ENCODE measurements at regions of chr6 and their contacts with region 1.

Region 1: GRCh38 chr6:169789982-169790927 is 38.8 kb downstream of the ERMARD start:
- DNase-seq: peak; percentile 60 to 73 (median 69)
- H3K4me3 ChIP-seq: peak overlapping the region; percentile 71 to 82
- H3K4me3 Mint-ChIP-seq: peak overlapping the region; percentile 88 to 93 (median 90)
- H3K27ac ChIP-seq: peak overlapping the region; percentile 4
- H3K27ac Mint-ChIP-seq: peak overlapping the region in 5 of 7 donors; percentile 53 to 88 (median 81)
- H3K4me1 ChIP-seq: peaks cover 16% of the 10 kb centered on the region
- H3K4me1 Mint-ChIP-seq: peaks cover 6 to 24% (median 13%) of the 10 kb centered on the region in 4 donors
- H3K27me3 ChIP-seq: no peaks in the 10 kb centered on the region
- H3K27me3 Mint-ChIP-seq: peaks cover 0 to 3% of the 10 kb centered on the region in 2 donors

Region 2: DNA sequence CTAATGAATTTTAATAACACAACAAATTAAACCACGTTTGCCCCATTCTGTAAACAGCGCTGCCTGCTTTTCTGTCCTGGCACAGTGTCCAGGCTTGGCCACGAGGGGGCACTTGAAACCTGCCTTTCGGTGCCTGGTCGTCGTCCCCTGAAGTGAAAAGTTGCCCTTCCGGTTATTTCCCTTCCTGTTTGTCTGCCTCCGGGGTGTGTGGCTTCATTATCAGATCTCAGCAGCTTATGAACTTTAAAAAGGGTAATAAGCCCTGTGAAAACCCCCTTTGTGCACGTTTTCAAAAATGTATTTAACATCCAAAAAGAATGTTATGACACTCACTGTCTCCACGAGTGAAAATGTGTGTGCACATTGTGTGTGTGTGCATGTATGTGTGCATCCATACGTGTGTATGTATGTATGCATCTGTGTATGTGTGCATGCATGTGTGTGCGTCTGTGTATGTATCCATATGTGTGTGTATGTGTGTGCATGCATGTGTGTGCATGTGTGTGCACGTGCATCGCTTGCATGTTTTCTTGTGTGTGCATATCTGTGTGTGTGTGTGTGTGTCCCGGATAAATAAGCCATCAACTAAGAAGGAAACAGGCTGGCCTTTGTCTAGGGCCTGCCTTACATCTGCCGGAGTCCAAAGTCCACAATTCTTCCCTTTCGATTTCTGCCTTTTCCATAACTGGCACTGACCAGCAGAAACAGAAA is 895.0 kb before region 1 on chr6:
- CTCF ChIA-PET with region 1: interaction called, 4 read pairs
- POLR2A ChIA-PET with region 1: no interaction called
- intact Hi-C with region 1: loop called (anchors 5 kb)
- DNase-seq: peak; percentile 71 to 78 (median 74)
- H3K4me3 ChIP-seq: no peak overlapping the region
- H3K4me3 Mint-ChIP-seq: peak overlapping the region; percentile 40 to 87 (median 60)
- H3K27ac ChIP-seq: no peak overlapping the region
- H3K27ac Mint-ChIP-seq: peak overlapping the region in 5 of 7 donors; percentile 8 to 77 (median 53)
- H3K4me1 ChIP-seq: peaks cover 8% of the 10 kb centered on the region
- H3K4me1 Mint-ChIP-seq: peaks cover 9 to 28% (median 11%) of the 10 kb centered on the region in 4 donors
- H3K27me3 ChIP-seq: no peaks in the 10 kb centered on the region
- H3K27me3 Mint-ChIP-seq: peaks cover 3% of the 10 kb centered on the region in 2 donors

Region 3: DNA sequence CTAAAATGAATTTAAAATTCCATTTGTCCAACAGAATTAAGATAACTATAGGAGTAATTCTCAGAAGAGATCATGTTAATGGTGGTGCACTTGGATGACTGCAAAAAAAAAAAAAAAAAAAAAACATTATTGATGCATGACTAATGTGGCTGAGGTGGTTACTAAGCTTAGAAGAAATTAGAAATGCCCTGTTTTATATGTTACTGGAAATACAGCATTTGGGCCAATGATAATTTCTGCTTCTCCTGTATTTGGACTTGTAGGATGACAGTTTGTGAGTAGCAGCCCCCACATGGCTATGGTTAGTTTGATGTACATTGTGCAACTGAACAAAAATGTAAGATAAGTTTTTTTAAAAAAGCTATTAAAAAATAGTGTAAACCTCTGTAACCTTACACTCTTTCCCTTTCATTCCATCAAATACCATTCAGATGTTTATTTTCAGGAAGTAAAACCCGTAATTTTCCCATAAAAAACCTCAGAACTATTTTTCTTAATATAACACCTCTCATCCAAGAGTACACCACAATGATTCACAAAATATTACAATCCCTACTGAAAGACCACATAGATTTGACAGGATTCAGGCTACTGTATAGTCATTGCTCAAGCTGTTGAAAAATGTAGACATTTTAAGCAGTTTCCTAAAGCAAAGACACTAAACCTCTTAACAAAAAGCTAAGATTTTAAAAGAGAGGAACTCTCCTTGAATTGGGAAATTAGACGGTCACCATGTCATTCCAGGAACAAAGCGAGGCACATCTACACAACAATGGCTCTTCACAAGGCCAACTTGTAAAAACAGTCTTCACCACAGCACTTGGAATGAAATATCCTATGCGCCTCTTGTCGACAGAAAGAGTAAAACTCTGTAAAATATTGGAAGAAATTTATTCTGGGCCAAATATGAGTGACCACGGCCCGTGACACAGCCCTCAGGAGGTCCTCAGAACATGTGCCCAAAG is 171.4 kb before region 1 on chr6:
- CTCF ChIA-PET with region 1: no interaction called
- POLR2A ChIA-PET with region 1: no interaction called
- intact Hi-C with region 1: no loop called
- DNase-seq: no peak
- H3K4me3 ChIP-seq: no peak overlapping the region
- H3K4me3 Mint-ChIP-seq: no peak overlapping the region
- H3K27ac ChIP-seq: no peak overlapping the region
- H3K27ac Mint-ChIP-seq: no peak overlapping the region
- H3K4me1 ChIP-seq: no peaks in the 10 kb centered on the region
- H3K4me1 Mint-ChIP-seq: no peaks in the 10 kb centered on the region
- H3K27me3 ChIP-seq: no peaks in the 10 kb centered on the region
- H3K27me3 Mint-ChIP-seq: no peaks in the 10 kb centered on the region

Region 4: DNA sequence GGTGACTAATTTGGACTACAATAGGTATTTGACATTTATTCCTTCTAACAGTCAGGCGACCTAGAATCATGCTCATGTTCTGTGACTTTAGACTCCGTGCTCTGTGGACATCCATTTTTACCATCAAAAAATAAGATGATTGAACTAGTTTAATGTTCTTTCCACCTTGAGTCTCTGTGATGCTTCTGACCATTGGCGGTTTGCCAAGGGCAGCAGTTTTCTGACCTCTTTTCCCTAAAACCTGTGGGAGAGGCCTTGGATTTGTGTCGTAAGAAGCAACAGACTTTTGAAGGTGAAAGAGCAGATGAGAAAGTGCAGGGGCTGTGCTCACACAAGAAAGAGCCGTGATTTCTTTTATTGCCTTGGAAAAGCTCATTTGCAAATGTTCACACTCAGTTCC is 21.4 kb before region 1 on chr6:
- CTCF ChIA-PET with region 1: interaction called, 16 read pairs
- POLR2A ChIA-PET with region 1: no interaction called
- intact Hi-C with region 1: no loop called
- DNase-seq: no peak
- H3K4me3 ChIP-seq: no peak overlapping the region
- H3K4me3 Mint-ChIP-seq: no peak overlapping the region
- H3K27ac ChIP-seq: no peak overlapping the region
- H3K27ac Mint-ChIP-seq: no peak overlapping the region
- H3K4me1 ChIP-seq: no peaks in the 10 kb centered on the region
- H3K4me1 Mint-ChIP-seq: peaks cover 0 to 7% (median 0%) of the 10 kb centered on the region in 4 donors
- H3K27me3 ChIP-seq: no peaks in the 10 kb centered on the region
- H3K27me3 Mint-ChIP-seq: no peaks in the 10 kb centered on the region

Region 5: DNA sequence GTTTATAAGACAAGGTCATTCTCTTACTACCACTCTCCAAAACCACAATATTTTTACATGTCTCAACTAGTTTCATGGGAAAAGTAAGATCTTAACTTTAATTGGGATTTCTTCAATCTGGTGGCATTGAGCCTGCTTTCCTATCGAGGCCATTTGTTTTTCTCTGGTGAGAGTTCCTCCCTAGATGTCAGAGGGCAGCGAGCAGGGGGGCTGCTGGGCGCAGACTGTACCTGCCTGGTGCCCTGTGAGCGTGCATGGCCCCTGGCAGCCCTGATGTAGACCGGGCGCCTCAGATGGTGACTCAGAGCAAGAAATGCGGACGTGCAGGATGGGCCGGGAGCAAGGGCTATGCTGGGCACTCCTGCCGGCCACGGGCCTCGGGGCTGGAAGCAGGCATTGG is 11.6 kb before region 1 on chr6:
- CTCF ChIA-PET with region 1: interaction called, 16 read pairs
- POLR2A ChIA-PET with region 1: no interaction called
- intact Hi-C with region 1: no loop called
- DNase-seq: no peak
- H3K4me3 ChIP-seq: no peak overlapping the region
- H3K4me3 Mint-ChIP-seq: no peak overlapping the region
- H3K27ac ChIP-seq: no peak overlapping the region
- H3K27ac Mint-ChIP-seq: peak overlapping the region in 1 of 7 donors; percentile 60
- H3K4me1 ChIP-seq: no peaks in the 10 kb centered on the region
- H3K4me1 Mint-ChIP-seq: no peaks in the 10 kb centered on the region
- H3K27me3 ChIP-seq: no peaks in the 10 kb centered on the region
- H3K27me3 Mint-ChIP-seq: no peaks in the 10 kb centered on the region

Region 6: DNA sequence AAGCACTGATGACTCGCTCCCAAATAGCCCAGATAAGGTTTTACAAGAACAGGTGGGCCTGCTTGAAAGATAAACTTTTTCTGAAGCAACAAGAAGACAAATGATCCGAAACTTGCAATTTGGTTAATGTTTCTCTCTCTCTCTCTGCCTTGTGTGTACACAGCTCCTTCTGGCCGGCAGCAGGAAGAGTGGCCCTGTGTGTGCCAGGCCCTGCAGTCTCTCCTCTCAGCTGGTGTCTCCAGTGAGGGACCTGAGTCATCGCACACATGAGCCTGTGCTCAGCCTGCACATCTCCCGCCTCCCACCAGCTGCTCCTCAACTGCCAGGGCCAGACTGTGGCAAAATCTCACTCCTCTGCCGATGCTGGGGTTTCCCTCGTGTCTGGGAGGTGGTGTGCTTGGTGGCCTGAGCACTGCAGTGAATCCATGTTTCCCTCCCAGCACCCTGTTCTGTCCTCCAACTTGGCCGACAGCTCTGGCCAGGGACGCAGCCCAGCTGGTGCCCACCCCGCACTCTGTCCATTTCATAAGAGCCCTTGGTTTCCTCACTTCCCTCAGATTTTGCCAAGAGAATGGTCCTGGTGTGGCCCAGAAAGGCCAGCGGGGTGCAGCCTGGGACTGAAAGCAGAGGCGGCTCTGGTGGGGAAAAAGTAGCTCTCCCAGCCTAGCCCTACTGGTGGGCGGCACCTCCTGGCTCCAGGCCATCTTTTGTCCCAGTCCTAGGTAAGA is 10.6 kb after region 1 on chr6:
- CTCF ChIA-PET with region 1: interaction called, 65 read pairs
- POLR2A ChIA-PET with region 1: no interaction called
- intact Hi-C with region 1: no loop called
- DNase-seq: no peak
- H3K4me3 ChIP-seq: no peak overlapping the region
- H3K4me3 Mint-ChIP-seq: no peak overlapping the region
- H3K27ac ChIP-seq: no peak overlapping the region
- H3K27ac Mint-ChIP-seq: no peak overlapping the region
- H3K4me1 ChIP-seq: peaks cover 27% of the 10 kb centered on the region
- H3K4me1 Mint-ChIP-seq: peaks cover 31 to 33% (median 31%) of the 10 kb centered on the region in 4 donors
- H3K27me3 ChIP-seq: no peaks in the 10 kb centered on the region
- H3K27me3 Mint-ChIP-seq: peaks cover 20 to 24% of the 10 kb centered on the region in 2 donors

Region 7: DNA sequence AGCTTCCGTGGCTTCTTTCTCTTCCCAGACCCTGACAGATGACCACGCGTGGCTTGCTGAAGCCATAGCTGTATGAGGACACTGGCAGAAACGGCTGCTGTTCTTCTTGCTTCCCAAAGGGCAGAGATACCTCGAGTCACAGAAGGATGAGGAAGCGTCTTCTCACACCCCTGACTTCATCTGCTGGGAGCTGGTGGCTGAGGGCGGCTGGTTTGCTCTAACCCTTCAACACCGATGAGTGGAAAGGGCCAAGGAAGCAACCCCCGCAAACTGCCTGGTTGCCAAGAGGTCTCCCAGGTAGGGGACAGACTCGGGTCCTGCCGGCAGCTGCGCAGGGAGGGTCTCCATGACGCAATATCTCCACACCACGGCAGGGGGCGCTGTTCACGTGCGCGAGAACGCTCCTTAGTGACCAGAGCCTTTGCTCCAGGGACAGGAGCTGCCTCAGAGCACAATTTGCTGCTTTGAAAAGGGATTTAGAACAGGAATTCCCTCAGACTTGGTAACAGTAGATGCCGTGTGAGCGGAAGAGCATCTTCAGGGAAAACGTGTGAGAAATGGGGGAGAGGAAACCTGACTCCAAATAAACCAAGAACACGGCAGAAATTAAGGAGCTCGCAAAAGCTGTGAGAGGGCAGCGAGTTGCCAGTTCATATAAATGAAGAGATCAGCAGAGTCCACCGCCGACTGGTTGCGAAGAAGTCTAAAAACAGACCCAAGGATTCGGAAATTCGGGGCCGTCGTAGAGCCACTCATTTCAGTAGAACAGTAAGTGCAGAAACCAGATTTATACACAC is 41.4 kb after region 1 on chr6:
- CTCF ChIA-PET with region 1: interaction called, 22 read pairs
- POLR2A ChIA-PET with region 1: no interaction called
- intact Hi-C with region 1: loop called (anchors 1 kb)
- DNase-seq: peak in 4 of 5 donors; percentile 52 to 56 (median 54)
- H3K4me3 ChIP-seq: no peak overlapping the region
- H3K4me3 Mint-ChIP-seq: no peak overlapping the region
- H3K27ac ChIP-seq: no peak overlapping the region
- H3K27ac Mint-ChIP-seq: peak overlapping the region in 1 of 7 donors; percentile 3
- H3K4me1 ChIP-seq: no peaks in the 10 kb centered on the region
- H3K4me1 Mint-ChIP-seq: peaks cover 0 to 6% (median 4%) of the 10 kb centered on the region in 4 donors
- H3K27me3 ChIP-seq: peaks cover 3% of the 10 kb centered on the region
- H3K27me3 Mint-ChIP-seq: peaks cover 26 to 30% of the 10 kb centered on the region in 2 donors

Region 8: GRCh38 chr6:169921853-169922824 is 131.9 kb after region 1 on chr6:
- CTCF ChIA-PET with region 1: no interaction called
- POLR2A ChIA-PET with region 1: no interaction called
- intact Hi-C with region 1: no loop called
- DNase-seq: no peak
- H3K4me3 ChIP-seq: no peak overlapping the region
- H3K4me3 Mint-ChIP-seq: no peak overlapping the region
- H3K27ac ChIP-seq: no peak overlapping the region
- H3K27ac Mint-ChIP-seq: no peak overlapping the region
- H3K4me1 ChIP-seq: no peaks in the 10 kb centered on the region
- H3K4me1 Mint-ChIP-seq: no peaks in the 10 kb centered on the region
- H3K27me3 ChIP-seq: no peaks in the 10 kb centered on the region
- H3K27me3 Mint-ChIP-seq: peaks cover 3 to 7% of the 10 kb centered on the region in 2 donors

Region 9: GRCh38 chr6:170529839-170530469 is 739.7 kb after region 1 on chr6:
- CTCF ChIA-PET with region 1: interaction called, 54 read pairs
- POLR2A ChIA-PET with region 1: no interaction called
- intact Hi-C with region 1: loop called (anchors 1 kb)
- DNase-seq: peak in 4 of 5 donors; percentile 41 to 53 (median 48)
- H3K4me3 ChIP-seq: no peak overlapping the region
- H3K4me3 Mint-ChIP-seq: no peak overlapping the region
- H3K27ac ChIP-seq: no peak overlapping the region
- H3K27ac Mint-ChIP-seq: peak overlapping the region in 2 of 7 donors; percentile 35 to 48
- H3K4me1 ChIP-seq: no peaks in the 10 kb centered on the region
- H3K4me1 Mint-ChIP-seq: peaks cover 0 to 2% (median under 1%) of the 10 kb centered on the region in 4 donors
- H3K27me3 ChIP-seq: no peaks in the 10 kb centered on the region
- H3K27me3 Mint-ChIP-seq: no peaks in the 10 kb centered on the region

Measured in CD4-positive, alpha-beta memory T cell (primary cell).